ENCODE measurements at regions of chr14 and their contacts with region 1.

Region 1: DNA sequence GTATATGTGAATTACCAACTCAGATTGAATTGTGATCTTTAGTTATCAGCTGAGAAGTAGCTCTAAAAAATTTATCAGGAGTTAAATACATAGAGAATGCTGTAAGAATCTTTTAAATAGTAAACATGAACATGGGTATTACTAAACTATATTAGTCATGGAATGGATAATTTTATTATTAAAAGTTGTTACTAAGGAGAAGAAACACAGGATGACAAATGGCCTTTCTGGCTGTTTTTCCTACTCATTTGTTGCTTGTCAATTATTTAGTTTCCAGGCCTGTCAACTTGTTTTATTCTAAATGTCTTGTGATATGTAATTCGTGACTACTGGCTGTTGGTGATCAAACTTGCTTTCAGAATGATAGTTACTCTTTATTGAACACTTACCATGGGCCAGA is 58.7 kb downstream of the KTN1 start:
- DNase-seq: no peak
- ATAC-seq: no peak
- H3K4me3 ChIP-seq: no peak overlapping the region
- H3K27ac ChIP-seq: no peak overlapping the region
- H3K4me1 ChIP-seq: no peaks in the 10 kb centered on the region
- H3K27me3 ChIP-seq: no peaks in the 10 kb centered on the region
- CTCF ChIP-seq: no peak
- EP300 ChIP-seq: no peak
- POLR2A ChIP-seq: no peak
- RAD21 ChIP-seq: no peak

Region 2: DNA sequence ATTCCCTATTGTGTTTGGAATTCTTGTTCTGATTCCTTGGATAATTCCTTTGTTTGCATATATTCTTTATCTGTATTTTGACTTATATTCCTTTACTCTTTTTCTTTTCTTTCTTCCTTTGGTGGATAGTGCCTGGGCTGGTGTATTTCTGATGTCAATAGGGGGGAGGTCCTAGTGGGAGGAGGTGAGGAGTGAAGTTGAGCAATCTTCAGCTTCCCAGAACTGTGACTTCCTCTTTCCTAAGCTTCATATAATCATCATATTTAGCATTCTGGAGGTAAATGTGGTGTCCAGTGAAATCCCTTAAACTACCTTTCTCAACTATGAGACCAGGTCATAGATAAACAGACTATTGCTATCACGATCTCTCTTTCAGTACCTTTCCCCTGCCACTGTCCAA is 168.6 kb before region 1 on chr14:
- CTCF ChIA-PET with region 1: no interaction called
- POLR2A ChIA-PET with region 1: no interaction called
- in situ Hi-C with region 1: no loop called
- intact Hi-C with region 1: no loop called
- DNase-seq: no peak
- ATAC-seq: no peak
- H3K4me3 ChIP-seq: no peak overlapping the region
- H3K27ac ChIP-seq: no peak overlapping the region
- H3K4me1 ChIP-seq: no peaks in the 10 kb centered on the region
- H3K27me3 ChIP-seq: peaks cover 0 to 27% of the 10 kb centered on the region in 2 experiments; a peak in 2 of 5 replicates
- CTCF ChIP-seq: no peak
- EP300 ChIP-seq: no peak
- POLR2A ChIP-seq: no peak
- RAD21 ChIP-seq: no peak

Region 3: GRCh38 chr14:55579724-55580469 is 58.8 kb before region 1 on chr14 and contains the start of gene KTN1:
- CTCF ChIA-PET with region 1: no interaction called
- POLR2A ChIA-PET with region 1: no interaction called
- in situ Hi-C with region 1: no loop called
- intact Hi-C with region 1: loop called (anchors 10 kb)
- DNase-seq: peak; percentile 50
- ATAC-seq: peak; percentile 91
- H3K4me3 ChIP-seq: peak within 1 kb of the TSS; percentile 92 to 98 (median 98)
- H3K27ac ChIP-seq: peak within 1 kb of the TSS; percentile 90
- H3K4me1 ChIP-seq: peaks cover 53% of the 10 kb centered on the region
- H3K27me3 ChIP-seq: no peaks in the 10 kb centered on the region; a peak in 1 of 5 replicates
- CTCF ChIP-seq: no peak
- EP300 ChIP-seq: no peak
- POLR2A ChIP-seq: peak; percentile 50 to 61; a peak in 1 of 4 replicates
- RAD21 ChIP-seq: peak; percentile 48
- total RNA-seq, gene KTN1: 138 and 169 TPM in 2 replicates

Region 4: GRCh38 chr14:55731881-55732498 is 93.3 kb after region 1 on chr14:
- CTCF ChIA-PET with region 1: no interaction called
- POLR2A ChIA-PET with region 1: no interaction called
- in situ Hi-C with region 1: no loop called
- intact Hi-C with region 1: no loop called
- DNase-seq: peak; percentile 16
- ATAC-seq: peak; percentile 55; the same call in 2 of the 3 replicates
- H3K4me3 ChIP-seq: no peak overlapping the region
- H3K27ac ChIP-seq: no peak overlapping the region
- H3K4me1 ChIP-seq: no peaks in the 10 kb centered on the region
- H3K27me3 ChIP-seq: no peaks in the 10 kb centered on the region
- CTCF ChIP-seq: peak; percentile 54
- EP300 ChIP-seq: no peak
- POLR2A ChIP-seq: no peak
- RAD21 ChIP-seq: no peak

Measured in HepG2 (cell line).